ENCODE measurements at regions of chr4 and their contacts with region 1.

Region 1: GRCh38 chr4:139030614-139031235 is 15.1 kb downstream of the NOCT start:
- DNase-seq: peak; percentile 50 to 88 (median 76)
- ATAC-seq: peak; percentile 81
- H3K4me3 ChIP-seq: no peak overlapping the region
- H3K4me3 Mint-ChIP-seq: no peak overlapping the region
- H3K27ac ChIP-seq: no peak overlapping the region
- H3K27ac Mint-ChIP-seq: no peak overlapping the region
- H3K4me1 ChIP-seq: peaks cover 2% of the 10 kb centered on the region
- H3K4me1 Mint-ChIP-seq: peaks cover 12% of the 10 kb centered on the region
- H3K27me3 ChIP-seq: no peaks in the 10 kb centered on the region
- H3K27me3 Mint-ChIP-seq: no peaks in the 10 kb centered on the region
- CTCF ChIP-seq: peak; percentile 81

Region 2: DNA sequence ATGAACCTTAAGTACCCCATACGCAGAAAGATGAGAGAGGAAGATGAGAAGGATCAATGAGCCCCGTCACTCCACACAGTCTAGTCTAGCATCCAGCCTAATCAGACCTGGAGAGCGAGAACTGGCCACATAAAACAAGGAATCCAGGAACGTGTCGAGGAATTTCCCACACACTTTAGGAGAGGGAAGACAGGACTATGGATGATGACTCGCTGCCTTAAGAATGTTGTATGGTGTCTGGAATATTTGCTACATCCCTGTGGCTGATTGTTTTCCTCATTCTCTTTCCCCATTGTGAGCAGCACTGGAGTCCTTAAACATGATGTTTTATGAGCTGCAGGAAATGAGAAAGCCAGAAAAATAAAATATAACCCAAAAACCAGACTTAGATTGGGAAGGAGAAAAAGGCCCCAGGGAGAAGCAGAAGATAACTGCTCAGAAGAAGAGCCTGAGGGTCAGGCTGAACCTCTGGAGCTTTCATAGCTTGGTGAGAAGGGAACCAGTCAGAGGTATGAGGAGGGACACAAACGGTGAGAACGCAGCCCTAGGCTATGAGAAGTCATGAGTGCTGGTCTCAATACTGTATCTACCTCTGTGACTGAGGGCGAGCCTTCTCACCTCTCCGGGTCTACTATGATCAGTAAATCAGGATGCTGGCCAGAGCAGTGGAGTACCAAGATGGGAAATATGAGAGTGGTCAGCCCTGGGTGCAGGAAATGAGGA is 154.7 kb before region 1 on chr4:
- CTCF ChIA-PET with region 1: no interaction called
- POLR2A ChIA-PET with region 1: no interaction called
- intact Hi-C with region 1: no loop called
- DNase-seq: no peak
- ATAC-seq: no peak
- H3K4me3 ChIP-seq: no peak overlapping the region
- H3K4me3 Mint-ChIP-seq: no peak overlapping the region
- H3K27ac ChIP-seq: no peak overlapping the region
- H3K27ac Mint-ChIP-seq: no peak overlapping the region
- H3K4me1 ChIP-seq: no peaks in the 10 kb centered on the region
- H3K4me1 Mint-ChIP-seq: no peaks in the 10 kb centered on the region
- H3K27me3 ChIP-seq: no peaks in the 10 kb centered on the region
- H3K27me3 Mint-ChIP-seq: peaks cover 25% of the 10 kb centered on the region
- CTCF ChIP-seq: no peak

Region 3: DNA sequence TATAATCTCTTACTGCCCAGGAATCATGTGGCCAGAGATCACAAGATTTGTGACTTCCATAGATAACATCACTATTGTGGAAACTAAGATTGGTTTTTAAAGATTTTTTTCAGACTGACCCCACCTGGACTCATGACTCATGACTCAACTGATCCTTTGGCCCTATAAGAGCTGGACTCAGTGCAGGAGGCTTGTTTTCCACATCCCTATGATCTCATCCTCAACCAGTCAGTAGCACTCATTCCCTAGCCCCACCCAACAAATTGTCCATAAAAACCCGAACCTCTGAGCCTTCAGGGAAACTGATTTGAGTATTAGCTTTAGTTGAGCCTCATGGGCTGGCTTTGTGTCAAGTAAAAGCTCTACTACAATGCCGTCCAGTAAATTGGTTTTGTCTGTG is 23.1 kb before region 1 on chr4:
- CTCF ChIA-PET with region 1: no interaction called
- POLR2A ChIA-PET with region 1: no interaction called
- intact Hi-C with region 1: no loop called
- DNase-seq: no peak
- ATAC-seq: no peak
- H3K4me3 ChIP-seq: no peak overlapping the region
- H3K4me3 Mint-ChIP-seq: no peak overlapping the region
- H3K27ac ChIP-seq: no peak overlapping the region
- H3K27ac Mint-ChIP-seq: no peak overlapping the region
- H3K4me1 ChIP-seq: no peaks in the 10 kb centered on the region
- H3K4me1 Mint-ChIP-seq: no peaks in the 10 kb centered on the region
- H3K27me3 ChIP-seq: no peaks in the 10 kb centered on the region
- H3K27me3 Mint-ChIP-seq: no peaks in the 10 kb centered on the region
- CTCF ChIP-seq: no peak

Region 4: DNA sequence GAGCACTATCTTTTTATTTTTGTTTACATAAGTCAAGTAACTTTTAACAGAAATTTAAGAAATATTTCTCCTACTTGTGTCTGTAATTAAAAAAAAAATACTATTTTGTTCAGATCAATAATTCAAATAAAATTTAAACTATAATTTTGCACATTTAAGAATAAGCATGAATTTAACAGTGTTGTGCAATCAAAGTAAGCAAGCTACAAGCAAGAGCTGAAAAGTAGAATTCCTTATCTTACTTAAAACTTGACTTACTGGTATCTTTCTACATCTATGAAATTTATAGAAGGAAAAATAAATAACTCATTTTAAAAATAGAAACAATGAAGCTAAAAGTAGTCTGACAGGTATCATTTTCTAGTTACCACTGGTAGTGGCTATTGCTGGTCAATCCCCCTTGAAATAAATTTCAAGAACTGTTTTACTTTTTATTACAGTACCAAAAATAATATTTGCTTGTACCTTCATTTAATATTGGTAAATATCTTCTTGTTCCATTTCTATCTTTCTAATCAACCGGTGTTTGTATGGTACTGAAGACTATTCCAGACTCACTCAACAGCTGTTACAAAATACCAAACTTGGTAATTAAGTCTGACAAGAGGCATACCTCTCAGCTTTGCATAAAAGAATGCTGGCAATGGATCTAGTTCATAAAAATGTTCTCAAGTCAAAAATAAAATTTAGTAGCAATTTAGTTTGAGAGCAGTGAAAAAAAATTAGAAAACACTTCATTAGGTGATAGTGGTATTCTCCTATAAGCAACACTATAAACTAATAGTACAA is 47.0 kb after region 1 on chr4:
- CTCF ChIA-PET with region 1: interaction called, 23 read pairs
- POLR2A ChIA-PET with region 1: interaction called, 3 read pairs
- intact Hi-C with region 1: no loop called
- DNase-seq: no peak
- ATAC-seq: no peak
- H3K4me3 ChIP-seq: no peak overlapping the region
- H3K4me3 Mint-ChIP-seq: no peak overlapping the region
- H3K27ac ChIP-seq: no peak overlapping the region
- H3K27ac Mint-ChIP-seq: peak overlapping the region; percentile 13
- H3K4me1 ChIP-seq: peaks cover 54% of the 10 kb centered on the region
- H3K4me1 Mint-ChIP-seq: peaks cover 73% of the 10 kb centered on the region
- H3K27me3 ChIP-seq: no peaks in the 10 kb centered on the region
- H3K27me3 Mint-ChIP-seq: no peaks in the 10 kb centered on the region
- CTCF ChIP-seq: no peak

Region 5: GRCh38 chr4:139099366-139099982 is 68.7 kb after region 1 on chr4:
- CTCF ChIA-PET with region 1: interaction called, 39 read pairs
- POLR2A ChIA-PET with region 1: no interaction called
- intact Hi-C with region 1: loop called (anchors 1 kb)
- DNase-seq: peak; percentile 37 to 89 (median 75)
- ATAC-seq: peak; percentile 80
- H3K4me3 ChIP-seq: no peak overlapping the region
- H3K4me3 Mint-ChIP-seq: no peak overlapping the region
- H3K27ac ChIP-seq: no peak overlapping the region
- H3K27ac Mint-ChIP-seq: no peak overlapping the region
- H3K4me1 ChIP-seq: no peaks in the 10 kb centered on the region
- H3K4me1 Mint-ChIP-seq: peaks cover 2% of the 10 kb centered on the region
- H3K27me3 ChIP-seq: no peaks in the 10 kb centered on the region
- H3K27me3 Mint-ChIP-seq: no peaks in the 10 kb centered on the region
- CTCF ChIP-seq: peak; percentile 76

Region 6: DNA sequence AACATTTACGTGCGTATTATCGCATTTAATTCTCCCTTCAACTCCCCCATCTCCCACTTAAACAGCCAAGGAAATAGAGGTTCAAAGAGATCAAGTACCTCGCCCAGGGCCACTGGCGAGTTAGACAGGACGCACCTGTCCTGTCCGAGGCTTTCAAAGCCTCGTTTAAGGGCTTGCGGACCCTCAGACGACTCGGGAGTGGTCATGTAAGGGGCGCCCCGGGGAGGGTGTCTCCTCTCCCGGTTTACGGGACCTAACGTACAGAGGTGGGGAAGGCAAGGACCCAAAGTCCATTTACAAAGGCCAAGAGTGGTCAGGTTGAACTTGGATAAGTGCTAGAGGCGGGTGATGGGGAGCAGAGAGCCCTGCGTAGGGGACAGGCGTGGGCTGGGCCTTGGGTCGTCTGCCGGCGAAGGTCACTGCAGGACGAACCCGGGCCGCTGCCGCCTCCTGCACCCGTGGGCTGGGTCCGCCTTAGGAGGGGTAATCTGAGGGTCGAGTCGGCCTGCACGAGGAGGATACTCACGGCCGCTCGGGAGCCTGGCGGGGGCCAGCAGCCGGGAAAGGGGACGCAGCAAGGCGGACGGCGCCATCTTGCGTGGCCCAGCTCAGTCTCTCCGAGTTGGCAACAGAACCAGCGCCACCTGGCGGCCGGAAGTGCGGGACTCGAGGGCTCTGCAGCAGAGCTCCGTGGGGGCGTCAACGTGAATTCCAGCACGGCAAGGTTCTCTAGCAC is 264.6 kb after region 1 on chr4:
- CTCF ChIA-PET with region 1: interaction called, 62 read pairs
- POLR2A ChIA-PET with region 1: interaction called, 6 read pairs
- intact Hi-C with region 1: loop called (anchors 1 to 2 kb)
- DNase-seq: peak; percentile 94 to 100 (median 99)
- ATAC-seq: peak; percentile 91
- H3K4me3 ChIP-seq: peak overlapping the region; percentile 65 to 91
- H3K4me3 Mint-ChIP-seq: peak overlapping the region; percentile 91
- H3K27ac ChIP-seq: peak overlapping the region; percentile 74 to 87
- H3K27ac Mint-ChIP-seq: peak overlapping the region; percentile 95
- H3K4me1 ChIP-seq: peaks cover 31% of the 10 kb centered on the region
- H3K4me1 Mint-ChIP-seq: peaks cover 37% of the 10 kb centered on the region
- H3K27me3 ChIP-seq: no peaks in the 10 kb centered on the region
- H3K27me3 Mint-ChIP-seq: no peaks in the 10 kb centered on the region
- CTCF ChIP-seq: peak; percentile 77

Region 7: DNA sequence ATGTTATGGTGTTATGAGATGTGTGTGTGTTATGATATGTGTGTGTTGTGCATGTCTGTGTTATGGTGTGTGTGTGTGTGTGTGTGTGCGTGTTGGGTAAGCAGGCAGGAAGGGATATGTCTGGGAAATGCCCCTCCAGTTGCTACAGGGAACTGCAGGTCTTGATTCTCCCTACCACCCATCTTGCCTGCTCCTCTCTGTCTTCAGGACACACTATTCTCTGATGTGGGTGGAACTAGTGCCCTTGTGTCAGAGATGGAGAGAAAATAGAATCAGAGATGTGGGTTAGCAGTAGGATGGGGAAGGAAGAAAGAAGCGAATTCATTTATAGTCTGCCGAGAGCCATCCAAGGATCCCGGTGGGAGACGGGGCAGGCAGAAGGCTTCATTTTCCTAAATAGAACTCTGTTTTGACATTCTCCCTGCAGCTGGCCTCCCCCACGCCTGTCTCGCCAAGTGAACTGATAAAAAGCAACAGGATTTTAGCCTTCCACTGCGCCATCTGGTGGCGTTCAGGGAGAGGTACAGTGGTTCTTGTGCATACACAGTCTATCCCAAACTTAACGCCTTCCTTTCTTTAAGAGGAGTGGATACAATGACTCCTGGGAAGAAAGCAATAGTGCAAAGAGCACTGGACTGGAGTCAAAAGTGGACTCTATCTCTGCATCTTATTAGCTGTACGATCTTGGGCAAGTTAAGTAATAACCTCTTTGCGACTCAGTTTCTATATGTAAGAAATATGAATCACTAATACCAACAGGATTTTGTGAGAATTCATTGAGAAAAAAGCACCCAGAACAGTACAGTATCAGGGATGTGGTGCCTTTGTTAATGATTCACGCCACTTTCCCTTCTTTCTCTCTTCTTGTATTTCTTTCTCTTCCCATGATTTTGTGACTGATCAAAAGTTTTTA is 620.8 kb after region 1 on chr4:
- CTCF ChIA-PET with region 1: interaction called, 34 read pairs
- POLR2A ChIA-PET with region 1: no interaction called
- intact Hi-C with region 1: loop called (anchors 1 to 2 kb)
- DNase-seq: peak; percentile 25 to 81 (median 64)
- ATAC-seq: peak; percentile 83
- H3K4me3 ChIP-seq: no peak overlapping the region
- H3K4me3 Mint-ChIP-seq: peak overlapping the region; percentile 0
- H3K27ac ChIP-seq: no peak overlapping the region
- H3K27ac Mint-ChIP-seq: no peak overlapping the region
- H3K4me1 ChIP-seq: no peaks in the 10 kb centered on the region
- H3K4me1 Mint-ChIP-seq: peaks cover 4% of the 10 kb centered on the region
- H3K27me3 ChIP-seq: no peaks in the 10 kb centered on the region
- H3K27me3 Mint-ChIP-seq: peaks cover 2% of the 10 kb centered on the region
- CTCF ChIP-seq: peak; percentile 91